Activated B cell treated with CpG ODN at 0.5 μM for 24 hours (primary cell): ENCODE measurements at regions of chr2 and their contacts with region 1.

Region 1: GRCh38 chr2:42256505-42256904 is 87.4 kb downstream of the EML4 start:
- DNase-seq: no peak
- ATAC-seq: peak; percentile 68
- H3K4me3 Mint-ChIP-seq: peak overlapping the region; percentile 4
- H3K27ac Mint-ChIP-seq: peak overlapping the region; percentile 32
- H3K4me1 Mint-ChIP-seq: peaks cover 45% of the 10 kb centered on the region
- H3K27me3 Mint-ChIP-seq: no peaks in the 10 kb centered on the region
- CTCF ChIP-seq: no peak

Region 2: DNA sequence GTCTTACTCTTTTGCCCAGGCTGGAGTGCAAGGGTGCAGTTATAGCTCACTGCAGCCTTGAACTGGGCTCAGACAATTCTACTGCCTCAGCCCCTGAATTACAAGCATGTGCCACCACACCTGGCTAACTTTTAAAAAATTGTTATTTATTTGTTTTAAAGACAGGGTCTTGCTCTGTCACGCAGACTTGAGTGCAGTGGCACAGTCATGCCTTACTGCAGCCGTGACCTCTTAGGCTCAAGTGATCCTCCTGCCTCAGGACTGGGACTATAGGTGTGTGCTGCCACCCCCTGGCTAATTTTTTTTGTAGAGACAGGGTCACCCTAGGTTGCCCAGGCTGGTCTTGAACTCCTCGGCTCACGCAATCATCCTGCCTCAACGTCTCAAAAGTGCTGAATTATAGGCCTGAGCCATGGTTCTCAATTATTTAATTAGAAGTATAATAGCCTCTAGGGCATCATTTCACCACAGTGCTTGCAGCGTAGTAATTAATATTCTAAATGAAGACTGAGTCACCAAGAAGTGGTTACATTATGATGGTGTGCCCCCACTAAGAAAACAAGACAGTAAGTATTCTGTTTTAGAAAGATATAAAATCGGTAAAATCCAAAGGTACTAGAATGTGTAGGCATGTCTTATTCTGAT is 17.7 kb before region 1 on chr2:
- CTCF ChIA-PET with region 1: interaction called, 3 read pairs
- POLR2A ChIA-PET with region 1: interaction called, 4 read pairs
- intact Hi-C with region 1: loop called (anchors 2 kb)
- DNase-seq: no peak
- ATAC-seq: peak; percentile 93
- H3K4me3 Mint-ChIP-seq: no peak overlapping the region
- H3K27ac Mint-ChIP-seq: no peak overlapping the region
- H3K4me1 Mint-ChIP-seq: peaks cover 82% of the 10 kb centered on the region
- H3K27me3 Mint-ChIP-seq: no peaks in the 10 kb centered on the region
- CTCF ChIP-seq: no peak

Region 3: DNA sequence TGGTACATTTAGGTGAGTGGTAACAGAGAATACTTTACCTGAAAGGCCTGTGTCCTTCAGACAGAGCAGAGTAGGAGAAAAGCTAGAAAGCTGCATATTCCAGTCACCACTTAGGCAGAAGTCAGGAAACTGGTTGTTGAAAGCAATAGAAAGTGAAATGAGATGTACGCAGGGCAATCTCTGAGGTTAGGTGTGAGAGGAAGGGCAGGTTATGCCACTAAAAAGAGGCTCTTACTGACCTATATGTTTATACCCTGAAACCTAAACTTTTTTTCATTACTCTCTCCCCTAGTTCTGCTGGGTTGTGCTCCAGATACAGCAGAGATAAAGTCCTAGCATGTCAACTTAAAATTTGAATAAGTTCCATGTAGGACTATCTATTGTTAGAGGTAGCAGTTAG is 11.0 kb after region 1 on chr2:
- CTCF ChIA-PET with region 1: no interaction called
- POLR2A ChIA-PET with region 1: no interaction called
- intact Hi-C with region 1: loop called (anchors 2 kb)
- DNase-seq: no peak
- ATAC-seq: no peak
- H3K4me3 Mint-ChIP-seq: no peak overlapping the region
- H3K27ac Mint-ChIP-seq: no peak overlapping the region
- H3K4me1 Mint-ChIP-seq: no peaks in the 10 kb centered on the region
- H3K27me3 Mint-ChIP-seq: no peaks in the 10 kb centered on the region
- CTCF ChIP-seq: no peak